ENCODE measurements at regions of chr12 and their contacts with region 1.

Region 1: GRCh38 chr12:59780605-59781135 is 184.8 kb downstream of the SLC16A7 start:
- DNase-seq: peak in 14 of 42 donors; percentile 12 to 61 (median 31)

Region 2: GRCh38 chr12:59595883-59596540 is 184.7 kb before region 1 on chr12 and contains the start of gene SLC16A7:
- intact Hi-C with region 1: loop called (anchors 5 kb)
- DNase-seq: peak; percentile 61 to 95 (median 86)

Region 3: DNA sequence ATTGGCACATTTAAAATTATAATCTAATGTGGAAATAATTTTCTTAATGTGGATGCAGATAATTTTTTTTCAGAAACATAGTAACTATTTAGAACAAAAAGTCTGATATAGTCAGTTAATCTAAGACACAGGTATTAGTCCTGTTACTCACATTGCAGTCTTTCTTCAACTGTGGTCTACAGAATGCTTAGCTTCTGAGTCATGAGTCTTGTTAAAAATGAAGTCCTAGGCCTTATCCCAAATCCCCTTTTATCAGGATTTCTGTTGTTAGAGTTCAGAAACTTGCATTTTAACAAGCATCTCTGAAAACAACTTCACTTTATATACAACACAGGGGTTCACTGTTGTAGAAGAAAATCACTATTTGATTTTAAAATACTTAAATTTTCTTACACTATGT is 72.6 kb before region 1 on chr12:
- intact Hi-C with region 1: no loop called
- DNase-seq: no peak

Region 4: GRCh38 chr12:59768031-59768430 is 12.6 kb before region 1 on chr12:
- intact Hi-C with region 1: no loop called
- DNase-seq: no peak

Region 5: GRCh38 chr12:59963546-59963945 is 182.9 kb after region 1 on chr12:
- intact Hi-C with region 1: no loop called
- DNase-seq: no peak